Activated CD8-positive, alpha-beta T cell treated with anti-CD3 and anti-CD28 coated beads, Interleukin-2, amount 10 ng/mL, durations not matched to agents 7 days and 5 days (primary cell): ENCODE measurements at regions of chr5 and their contacts with region 1.

Region 1: DNA sequence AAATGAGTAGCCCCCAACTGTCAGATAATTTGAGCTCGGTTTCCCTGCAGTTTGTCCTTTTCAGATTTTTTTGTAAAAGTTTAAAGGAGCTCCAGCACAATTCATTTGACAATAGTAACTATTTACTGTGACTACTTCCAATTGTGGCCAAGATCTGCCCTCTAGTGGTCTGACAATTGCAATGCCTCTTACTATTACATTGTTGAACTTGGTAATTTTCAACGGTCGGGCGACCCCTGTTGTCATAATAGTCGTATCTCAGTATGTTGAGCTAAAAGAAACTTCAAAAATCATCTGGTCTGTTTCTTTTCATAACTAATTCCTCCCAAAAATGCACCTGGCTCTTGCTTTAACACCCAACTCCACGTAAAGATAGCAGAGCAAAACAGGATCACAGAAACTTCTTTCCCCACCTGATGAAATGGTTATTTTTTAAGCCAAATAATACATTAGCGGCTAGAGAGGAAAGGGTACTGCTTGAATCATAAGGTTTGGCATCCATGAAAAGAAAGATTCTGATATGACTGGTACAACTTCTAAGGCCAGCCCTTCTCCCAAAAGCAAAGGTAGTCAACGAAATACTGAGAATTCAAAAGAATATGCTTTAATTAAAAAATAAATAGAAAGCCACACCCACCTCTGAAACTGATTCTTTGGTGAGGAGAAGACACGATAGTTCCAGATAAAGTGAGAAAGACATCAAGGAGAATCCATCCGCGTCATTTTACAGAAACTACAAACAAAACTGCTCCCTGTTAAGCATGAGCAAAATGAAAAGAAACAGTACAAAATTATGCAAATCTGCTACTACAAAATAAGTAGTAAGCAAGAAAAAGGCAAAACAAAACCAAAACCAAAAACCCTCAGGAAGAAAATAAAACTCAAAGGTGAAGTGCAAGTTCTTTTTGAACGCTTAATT is 76.9 kb upstream of the HTR4 start:
- DNase-seq: peak; percentile 85
- ATAC-seq: peak; percentile 98
- H3K4me3 Mint-ChIP-seq: peak overlapping the region; percentile 53
- H3K27ac Mint-ChIP-seq: peak overlapping the region; percentile 47
- H3K4me1 Mint-ChIP-seq: peaks cover 2% of the 10 kb centered on the region
- H3K27me3 Mint-ChIP-seq: peaks cover 14% of the 10 kb centered on the region

Region 2: DNA sequence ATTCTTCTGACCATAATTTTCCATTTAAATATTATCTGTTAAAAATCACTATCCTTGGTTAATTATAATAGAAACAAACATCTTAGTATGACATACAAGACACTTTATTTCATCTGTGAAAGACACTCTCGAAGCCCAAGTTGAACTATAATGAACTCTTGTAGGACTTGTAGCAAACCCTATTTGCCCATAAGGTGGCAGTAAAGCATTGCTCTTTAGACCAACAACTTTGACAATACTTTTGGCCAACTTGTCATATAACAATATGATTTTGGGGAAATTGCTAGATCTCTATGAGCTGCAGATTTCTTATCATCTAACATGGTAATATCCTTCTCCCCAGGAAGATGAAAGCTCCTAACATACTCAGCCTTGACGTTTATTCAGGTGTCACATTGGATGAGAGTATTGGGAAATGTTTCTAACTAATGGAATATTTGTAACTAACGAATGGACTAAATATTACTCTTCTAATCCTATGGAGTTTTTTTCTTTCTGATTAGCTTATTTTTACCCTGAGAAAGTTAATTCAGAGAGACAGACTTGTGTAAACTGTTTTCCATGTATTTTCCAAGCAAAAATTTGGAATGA is 551.9 kb before region 1 on chr5:
- CTCF ChIA-PET with region 1: interaction called, 27 read pairs
- POLR2A ChIA-PET with region 1: no interaction called
- DNase-seq: peak; percentile 25
- ATAC-seq: no peak
- H3K4me3 Mint-ChIP-seq: no peak overlapping the region
- H3K27ac Mint-ChIP-seq: no peak overlapping the region
- H3K4me1 Mint-ChIP-seq: no peaks in the 10 kb centered on the region
- H3K27me3 Mint-ChIP-seq: peaks cover 9% of the 10 kb centered on the region

Region 3: DNA sequence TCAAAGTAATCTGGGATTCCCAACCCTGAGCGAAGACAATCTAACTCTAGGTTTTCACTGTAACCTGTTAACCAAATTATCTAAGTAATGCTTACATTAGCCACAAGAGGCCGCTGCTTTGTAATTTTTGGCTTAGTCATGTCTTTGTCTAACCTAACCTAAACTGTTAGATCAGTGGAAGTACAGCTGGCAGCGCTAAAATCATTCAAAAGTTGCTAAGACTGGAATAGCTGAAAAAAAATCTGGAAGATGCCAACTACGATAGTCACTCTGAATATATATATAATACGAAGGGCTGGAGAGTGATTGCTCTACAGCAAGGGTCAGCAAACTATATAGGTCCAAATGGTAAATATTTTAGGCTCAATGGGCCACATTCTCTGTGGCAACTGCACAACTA is 287.2 kb before region 1 on chr5:
- CTCF ChIA-PET with region 1: interaction called, 204 read pairs
- POLR2A ChIA-PET with region 1: no interaction called
- DNase-seq: peak; percentile 68
- ATAC-seq: peak; percentile 85
- H3K4me3 Mint-ChIP-seq: no peak overlapping the region
- H3K27ac Mint-ChIP-seq: no peak overlapping the region
- H3K4me1 Mint-ChIP-seq: no peaks in the 10 kb centered on the region
- H3K27me3 Mint-ChIP-seq: no peaks in the 10 kb centered on the region

Region 4: DNA sequence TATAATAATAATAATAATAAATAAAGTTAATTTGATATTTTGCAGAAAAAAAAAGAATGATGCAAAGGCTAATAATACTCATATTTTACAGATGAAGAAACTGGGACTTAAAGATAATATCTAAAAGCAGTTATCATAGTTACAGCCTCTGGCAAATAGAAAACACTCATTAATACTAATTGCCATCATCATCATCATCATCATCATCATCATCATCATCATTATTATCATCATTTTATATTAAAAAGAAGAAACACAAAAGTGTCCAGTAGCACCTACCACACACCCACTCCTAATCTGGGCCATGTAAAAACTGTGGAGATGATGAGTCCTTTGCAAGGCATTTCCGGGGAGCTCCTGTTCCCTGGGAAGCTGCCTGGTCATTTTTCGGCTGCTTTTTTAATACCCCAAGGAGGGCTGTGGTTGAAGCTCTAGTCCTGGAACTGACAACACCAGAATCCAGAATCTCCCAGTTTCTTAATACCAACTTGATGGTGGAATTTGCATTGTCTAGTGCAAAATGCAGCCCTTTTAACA is 147.7 kb before region 1 on chr5:
- CTCF ChIA-PET with region 1: no interaction called
- POLR2A ChIA-PET with region 1: no interaction called
- DNase-seq: no peak
- ATAC-seq: no peak
- H3K4me3 Mint-ChIP-seq: no peak overlapping the region
- H3K27ac Mint-ChIP-seq: no peak overlapping the region
- H3K4me1 Mint-ChIP-seq: no peaks in the 10 kb centered on the region
- H3K27me3 Mint-ChIP-seq: peaks cover 2% of the 10 kb centered on the region

Region 5: GRCh38 chr5:148708854-148709253 is 22.3 kb before region 1 on chr5:
- CTCF ChIA-PET with region 1: interaction called, 14 read pairs
- POLR2A ChIA-PET with region 1: no interaction called
- DNase-seq: no peak
- ATAC-seq: no peak
- H3K4me3 Mint-ChIP-seq: no peak overlapping the region
- H3K27ac Mint-ChIP-seq: no peak overlapping the region
- H3K4me1 Mint-ChIP-seq: no peaks in the 10 kb centered on the region
- H3K27me3 Mint-ChIP-seq: no peaks in the 10 kb centered on the region

Region 6: DNA sequence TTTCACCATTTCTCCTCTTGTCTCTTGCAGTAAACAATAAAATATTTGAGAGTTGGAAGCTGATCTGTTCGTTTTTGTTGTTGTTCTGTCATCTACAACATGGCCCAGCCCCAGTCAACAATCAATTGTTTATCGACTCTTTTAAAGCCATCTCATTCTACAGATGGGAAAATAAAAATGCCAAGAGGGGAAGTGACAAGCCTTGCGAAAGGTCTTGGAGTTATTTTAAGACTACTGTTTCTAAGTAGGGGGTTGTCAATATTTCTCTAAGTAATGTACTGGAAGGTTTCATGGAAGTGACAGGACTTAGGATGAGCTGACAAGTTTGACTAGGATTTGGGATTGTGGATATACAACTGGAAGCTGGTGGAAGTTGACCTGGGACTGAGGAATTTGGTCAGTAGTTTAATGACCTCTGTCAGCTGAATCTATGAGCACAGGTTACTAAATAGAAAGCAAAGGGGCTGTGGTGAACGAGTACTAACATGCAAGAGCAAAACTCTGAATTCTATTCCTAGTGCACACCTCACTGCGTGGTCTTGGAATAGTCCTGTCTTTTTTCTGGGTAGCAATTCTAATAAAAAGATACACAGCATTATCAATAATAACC is 37.7 kb after region 1 on chr5:
- CTCF ChIA-PET with region 1: no interaction called
- POLR2A ChIA-PET with region 1: no interaction called
- DNase-seq: no peak
- ATAC-seq: no peak
- H3K4me3 Mint-ChIP-seq: no peak overlapping the region
- H3K27ac Mint-ChIP-seq: no peak overlapping the region
- H3K4me1 Mint-ChIP-seq: no peaks in the 10 kb centered on the region
- H3K27me3 Mint-ChIP-seq: peaks cover 47% of the 10 kb centered on the region

Region 7: GRCh38 chr5:148780711-148781110 is 49.5 kb after region 1 on chr5:
- CTCF ChIA-PET with region 1: no interaction called
- POLR2A ChIA-PET with region 1: no interaction called
- DNase-seq: no peak
- ATAC-seq: no peak
- H3K4me3 Mint-ChIP-seq: no peak overlapping the region
- H3K27ac Mint-ChIP-seq: no peak overlapping the region
- H3K4me1 Mint-ChIP-seq: no peaks in the 10 kb centered on the region
- H3K27me3 Mint-ChIP-seq: peaks cover 17% of the 10 kb centered on the region

Region 8: GRCh38 chr5:148963664-148964063 is 232.5 kb after region 1 on chr5:
- CTCF ChIA-PET with region 1: interaction called, 88 read pairs
- POLR2A ChIA-PET with region 1: no interaction called
- DNase-seq: no peak
- ATAC-seq: peak; percentile 57
- H3K4me3 Mint-ChIP-seq: no peak overlapping the region
- H3K27ac Mint-ChIP-seq: no peak overlapping the region
- H3K4me1 Mint-ChIP-seq: peaks cover 8% of the 10 kb centered on the region
- H3K27me3 Mint-ChIP-seq: peaks cover 11% of the 10 kb centered on the region

Region 9: GRCh38 chr5:149035372-149035790 is 304.2 kb after region 1 on chr5:
- CTCF ChIA-PET with region 1: interaction called, 307 read pairs
- POLR2A ChIA-PET with region 1: no interaction called
- DNase-seq: peak; percentile 79
- ATAC-seq: peak; percentile 89
- H3K4me3 Mint-ChIP-seq: no peak overlapping the region
- H3K27ac Mint-ChIP-seq: no peak overlapping the region
- H3K4me1 Mint-ChIP-seq: peaks cover 30% of the 10 kb centered on the region
- H3K27me3 Mint-ChIP-seq: peaks cover 6% of the 10 kb centered on the region